Posterior vena cava (tissue), 2 donors: ENCODE measurements at regions of chr16 and their contacts with region 1.

Region 1: GRCh38 chr16:74596586-74596985 is 10.3 kb downstream of the GLG1 start:
- DNase-seq: no peak

Region 2: GRCh38 chr16:74153773-74154172 is 442.8 kb before region 1 on chr16:
- intact Hi-C with region 1: loop called in 1 of 2 experiments (anchors 5 kb)
- DNase-seq: no peak

Region 3: GRCh38 chr16:74606521-74607310 is 10.1 kb after region 1 on chr16 and contains the start of gene GLG1:
- intact Hi-C with region 1: no loop called
- DNase-seq: peak; percentile 98
- total RNA-seq, gene GLG1: 101 to 143 TPM